GM10248 (cell line): ENCODE measurements at regions of chr16 and their contacts with region 1.

Region 1: GRCh38 chr16:30112197-30113030 is 923 bp downstream of the GDPD3 start:
- DNase-seq: peak; percentile 86
- CTCF ChIP-seq: peak; percentile 80

Region 2: DNA sequence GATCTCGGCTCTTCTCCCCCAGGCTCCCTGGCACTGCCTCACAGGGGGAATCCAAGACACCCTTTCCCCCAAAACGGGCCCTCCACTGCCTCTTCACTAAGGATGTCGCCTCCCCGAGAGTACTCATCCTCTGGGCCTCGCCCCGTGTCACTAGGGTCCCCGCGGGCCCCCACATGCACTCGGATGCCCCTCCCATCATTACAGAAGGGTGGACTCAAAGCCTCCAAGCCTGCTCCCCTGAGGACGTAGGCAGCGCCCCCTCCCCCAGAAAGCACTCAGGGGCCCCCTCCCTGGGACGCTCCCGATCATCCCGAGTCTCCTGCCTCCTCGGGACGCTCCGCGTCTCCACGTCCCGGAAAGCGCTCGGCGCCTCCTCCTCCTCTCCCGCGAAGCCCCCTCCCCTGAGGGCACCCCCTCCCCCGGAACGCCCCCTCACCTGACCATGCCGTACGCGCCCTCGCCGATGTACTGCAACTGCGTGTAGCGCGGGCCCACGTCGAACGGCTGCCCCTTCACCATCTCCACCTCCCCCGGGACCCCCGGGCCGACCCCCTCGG is 10.3 kb after region 1 on chr16:
- CTCF ChIA-PET with region 1: interaction called, 12 read pairs
- POLR2A ChIA-PET with region 1: no interaction called
- DNase-seq: no peak
- CTCF ChIP-seq: no peak